ENCODE measurements at regions of chr20 and their contacts with region 1.

Region 1: GRCh38 chr20:1437235-1437904 is 29.3 kb downstream of the NSFL1C start:
- DNase-seq: peak; percentile 55
- H3K4me3 ChIP-seq: no peak overlapping the region
- H3K27ac ChIP-seq: no peak overlapping the region
- H3K27me3 ChIP-seq: no peaks in the 10 kb centered on the region
- CTCF ChIP-seq: peak; percentile 92

Region 2: GRCh38 chr20:1313236-1313964 is 124.0 kb before region 1 on chr20:
- in situ Hi-C with region 1: loop called (anchors 25 kb)
- DNase-seq: peak; percentile 31
- H3K4me3 ChIP-seq: peak overlapping the region; percentile 37
- H3K27ac ChIP-seq: no peak overlapping the region
- H3K27me3 ChIP-seq: no peaks in the 10 kb centered on the region
- CTCF ChIP-seq: peak; percentile 97

Region 3: GRCh38 chr20:1500491-1501275 is 63.3 kb after region 1 on chr20:
- in situ Hi-C with region 1: no loop called
- DNase-seq: no peak
- H3K4me3 ChIP-seq: no peak overlapping the region
- H3K27ac ChIP-seq: no peak overlapping the region
- H3K27me3 ChIP-seq: peaks cover 5% of the 10 kb centered on the region
- CTCF ChIP-seq: no peak

Region 4: DNA sequence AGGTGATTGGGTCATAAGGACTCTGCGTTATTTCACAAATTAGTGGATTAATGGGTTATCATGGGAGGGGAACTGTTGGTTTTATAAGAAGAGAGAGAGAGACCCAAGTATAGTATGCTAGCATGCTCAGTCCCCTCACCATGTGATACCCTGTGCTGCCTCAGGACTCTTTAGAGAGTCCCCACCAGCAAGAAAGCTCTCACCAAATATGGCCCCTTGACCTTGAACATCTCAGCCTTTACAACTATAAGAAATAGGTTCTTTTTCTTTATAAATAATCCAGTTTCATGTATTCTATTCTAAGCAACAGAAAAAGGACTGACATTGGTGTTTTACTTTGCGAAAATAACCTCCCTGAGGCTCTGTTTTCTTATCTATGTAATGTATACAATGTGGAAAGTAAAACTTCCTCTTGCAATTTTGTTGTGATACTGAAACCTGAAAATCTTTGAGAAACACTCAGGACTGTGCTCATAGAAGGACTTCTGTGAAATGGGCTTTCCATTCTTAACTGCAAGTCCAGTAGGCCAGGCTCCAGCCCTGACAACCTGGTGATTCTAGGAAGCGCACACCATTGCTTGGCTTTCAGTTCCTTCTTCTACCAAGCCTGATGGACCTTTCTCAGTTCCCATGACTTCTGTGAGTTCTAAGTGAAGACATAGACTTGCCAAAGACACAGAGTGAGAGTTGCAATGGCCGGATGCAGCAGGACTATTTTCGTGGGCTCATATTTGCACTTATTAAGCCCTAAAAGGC is 98.2 kb after region 1 on chr20:
- in situ Hi-C with region 1: no loop called
- DNase-seq: no peak
- H3K4me3 ChIP-seq: no peak overlapping the region
- H3K27ac ChIP-seq: no peak overlapping the region
- H3K27me3 ChIP-seq: no peaks in the 10 kb centered on the region
- CTCF ChIP-seq: no peak